Activated B cell treated with CpG ODN at 0.5 μM for 24 hours (primary cell): ENCODE measurements at regions of chr6 and their contacts with region 1.

Region 1: GRCh38 chr6:37005061-37005810 is at the start of gene FGD2:
- DNase-seq: peak; percentile 75
- ATAC-seq: peak; percentile 73
- H3K4me3 Mint-ChIP-seq: peak within 1 kb of the TSS; percentile 100
- H3K27ac Mint-ChIP-seq: peak within 1 kb of the TSS; percentile 92
- H3K4me1 Mint-ChIP-seq: peaks cover 84% of the 10 kb centered on the region
- H3K27me3 Mint-ChIP-seq: no peaks in the 10 kb centered on the region
- CTCF ChIP-seq: no peak
- total RNA-seq, gene FGD2: 362 and 435 TPM in 2 replicates

Region 2: GRCh38 chr6:36874443-36875249 is 130.6 kb before region 1 on chr6 and contains the start of gene PPIL1:
- CTCF ChIA-PET with region 1: interaction called, 6 read pairs
- POLR2A ChIA-PET with region 1: interaction called, 15 read pairs
- intact Hi-C with region 1: no loop called
- DNase-seq: peak; percentile 83
- ATAC-seq: peak; percentile 94
- H3K4me3 Mint-ChIP-seq: peak within 1 kb of the TSS; percentile 98
- H3K27ac Mint-ChIP-seq: peak within 1 kb of the TSS; percentile 99
- H3K4me1 Mint-ChIP-seq: peaks cover 27% of the 10 kb centered on the region
- H3K27me3 Mint-ChIP-seq: no peaks in the 10 kb centered on the region
- CTCF ChIP-seq: no peak
- total RNA-seq, gene PPIL1: 23.4 and 27.0 TPM in 2 replicates

Region 3: DNA sequence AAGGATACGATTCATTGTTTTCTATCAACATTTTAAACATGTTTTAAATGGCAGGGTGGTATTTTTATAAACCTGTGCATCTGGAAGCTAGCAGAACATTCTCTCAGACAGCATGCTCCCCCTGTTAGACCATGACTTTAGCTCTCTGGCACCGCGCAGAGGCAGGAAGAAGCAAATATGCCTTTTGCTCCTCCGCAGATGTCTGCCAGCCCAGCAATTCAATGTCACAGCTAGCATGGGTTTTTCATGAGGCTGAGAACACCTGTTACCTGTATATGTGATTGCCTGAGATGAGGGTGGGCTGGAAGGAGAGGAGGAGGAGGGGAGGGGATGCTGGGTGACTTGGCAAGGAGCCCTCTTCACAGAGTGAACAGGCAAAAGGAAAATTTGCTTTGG is 25.9 kb before region 1 on chr6:
- CTCF ChIA-PET with region 1: interaction called, 38 read pairs
- POLR2A ChIA-PET with region 1: interaction called, 209 read pairs
- intact Hi-C with region 1: loop called (anchors 1 kb)
- DNase-seq: no peak
- ATAC-seq: peak; percentile 58
- H3K4me3 Mint-ChIP-seq: no peak overlapping the region
- H3K27ac Mint-ChIP-seq: no peak overlapping the region
- H3K4me1 Mint-ChIP-seq: peaks cover 30% of the 10 kb centered on the region
- H3K27me3 Mint-ChIP-seq: no peaks in the 10 kb centered on the region
- CTCF ChIP-seq: no peak

Region 4: GRCh38 chr6:37029249-37029971 is 24.2 kb after region 1 on chr6:
- CTCF ChIA-PET with region 1: interaction called, 6 read pairs
- POLR2A ChIA-PET with region 1: interaction called, 17 read pairs
- intact Hi-C with region 1: no loop called
- DNase-seq: no peak
- ATAC-seq: peak; percentile 63
- H3K4me3 Mint-ChIP-seq: no peak overlapping the region
- H3K27ac Mint-ChIP-seq: peak overlapping the region; percentile 68
- H3K4me1 Mint-ChIP-seq: peaks cover 50% of the 10 kb centered on the region
- H3K27me3 Mint-ChIP-seq: no peaks in the 10 kb centered on the region
- CTCF ChIP-seq: no peak

Region 5: GRCh38 chr6:37177077-37177934 is 172.1 kb after region 1 on chr6:
- CTCF ChIA-PET with region 1: interaction called, 3 read pairs
- POLR2A ChIA-PET with region 1: interaction called, 48 read pairs
- intact Hi-C with region 1: no loop called
- DNase-seq: no peak
- ATAC-seq: peak; percentile 37
- H3K4me3 Mint-ChIP-seq: peak overlapping the region; percentile 65
- H3K27ac Mint-ChIP-seq: peak overlapping the region; percentile 90
- H3K4me1 Mint-ChIP-seq: peaks cover 62% of the 10 kb centered on the region
- H3K27me3 Mint-ChIP-seq: no peaks in the 10 kb centered on the region
- CTCF ChIP-seq: no peak